ENCODE measurements at regions of chr17 and their contacts with region 1.

Region 1: GRCh38 chr17:12421646-12422306 is 243.9 kb upstream of the MYOCD start:
- DNase-seq: no peak
- ATAC-seq: no peak
- H3K4me3 Mint-ChIP-seq: no peak overlapping the region
- H3K27ac Mint-ChIP-seq: no peak overlapping the region
- H3K4me1 Mint-ChIP-seq: no peaks in the 10 kb centered on the region
- H3K27me3 Mint-ChIP-seq: no peaks in the 10 kb centered on the region
- CTCF ChIP-seq: no peak

Region 2: GRCh38 chr17:12365805-12366204 is 56.0 kb before region 1 on chr17:
- CTCF ChIA-PET with region 1: no interaction called
- POLR2A ChIA-PET with region 1: no interaction called
- intact Hi-C with region 1: loop called (anchors 10 kb)
- DNase-seq: no peak
- ATAC-seq: no peak
- H3K4me3 Mint-ChIP-seq: no peak overlapping the region
- H3K27ac Mint-ChIP-seq: no peak overlapping the region
- H3K4me1 Mint-ChIP-seq: no peaks in the 10 kb centered on the region
- H3K27me3 Mint-ChIP-seq: peaks cover 2% of the 10 kb centered on the region
- CTCF ChIP-seq: no peak

Region 3: DNA sequence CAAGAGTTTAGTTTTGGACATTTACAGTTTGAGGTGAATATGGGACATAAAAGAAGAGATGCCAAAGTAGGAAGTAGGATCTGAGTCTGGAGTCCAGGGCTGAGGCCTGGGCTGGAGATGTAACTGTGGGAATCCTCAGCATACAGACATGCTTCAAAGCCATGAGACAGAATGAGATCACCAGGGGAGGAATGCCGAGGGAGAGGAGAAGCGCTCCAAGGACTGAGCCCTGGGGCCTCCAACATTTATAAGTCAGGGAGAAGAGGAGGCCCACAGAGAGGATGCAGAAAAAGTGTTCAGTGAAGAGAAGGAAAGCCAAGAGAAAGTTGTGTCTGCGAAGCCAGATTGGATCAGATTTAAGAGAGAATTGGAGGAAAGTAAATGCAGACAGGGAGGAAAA is 33.5 kb before region 1 on chr17:
- CTCF ChIA-PET with region 1: no interaction called
- POLR2A ChIA-PET with region 1: no interaction called
- intact Hi-C with region 1: no loop called
- DNase-seq: no peak
- ATAC-seq: no peak
- H3K4me3 Mint-ChIP-seq: no peak overlapping the region
- H3K27ac Mint-ChIP-seq: no peak overlapping the region
- H3K4me1 Mint-ChIP-seq: no peaks in the 10 kb centered on the region
- H3K27me3 Mint-ChIP-seq: no peaks in the 10 kb centered on the region
- CTCF ChIP-seq: no peak